ENCODE measurements at regions of chr5 and their contacts with region 1.

Region 1: GRCh38 chr5:78899922-78900362 is 85.2 kb downstream of the ARSB start:
- DNase-seq: no peak
- ATAC-seq: peak; percentile 88
- H3K4me3 ChIP-seq: no peak overlapping the region
- H3K27ac ChIP-seq: no peak overlapping the region
- H3K4me1 ChIP-seq: peaks cover 6% of the 10 kb centered on the region
- H3K27me3 ChIP-seq: no peaks in the 10 kb centered on the region
- CTCF ChIP-seq: peak; percentile 65 to 86 (median 77)
- EP300 ChIP-seq: no peak
- POLR2A ChIP-seq: no peak
- RAD21 ChIP-seq: peak; percentile 94

Region 2: DNA sequence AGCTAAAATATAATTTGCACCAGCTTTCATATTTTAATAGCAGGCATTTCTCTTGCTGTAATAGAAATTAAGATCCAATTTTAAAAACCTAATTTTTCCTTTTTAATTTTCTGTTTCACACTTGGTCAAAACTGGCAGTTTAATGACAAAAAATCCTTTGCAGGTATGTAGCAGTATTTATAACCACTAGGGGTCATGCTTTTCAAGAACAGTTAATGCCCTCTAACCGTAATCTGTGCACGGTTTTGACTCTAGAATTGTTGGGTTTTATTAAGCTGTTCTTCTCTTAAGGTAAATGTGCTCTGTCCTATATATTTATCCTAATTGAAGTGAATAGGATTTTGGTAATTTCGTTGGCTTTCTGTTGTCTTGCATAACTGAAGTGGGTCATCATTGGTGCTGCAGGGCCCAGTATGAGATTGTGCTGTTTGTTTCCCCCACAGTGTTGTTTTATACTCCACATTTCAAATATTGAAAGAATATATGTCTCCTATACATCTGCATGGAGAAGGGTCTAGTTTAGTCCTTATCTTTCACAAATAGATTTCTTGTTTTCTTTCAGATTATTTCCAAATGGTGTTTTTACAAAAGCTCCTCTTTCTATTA is 432.1 kb before region 1 on chr5:
- CTCF ChIA-PET with region 1: interaction called, 11 read pairs
- POLR2A ChIA-PET with region 1: no interaction called
- RAD21 ChIA-PET with region 1: interaction called, 3 read pairs
- SMC1A ChIA-PET with region 1: interaction called, 4 read pairs
- in situ Hi-C with region 1: no loop called
- intact Hi-C with region 1: no loop called
- DNase-seq: peak; percentile 3
- ATAC-seq: peak; percentile 91
- H3K4me3 ChIP-seq: no peak overlapping the region
- H3K27ac ChIP-seq: no peak overlapping the region
- H3K4me1 ChIP-seq: no peaks in the 10 kb centered on the region
- H3K27me3 ChIP-seq: no peaks in the 10 kb centered on the region
- CTCF ChIP-seq: peak; percentile 55 to 76 (median 64)
- EP300 ChIP-seq: no peak
- POLR2A ChIP-seq: no peak
- RAD21 ChIP-seq: peak; percentile 76

Region 3: GRCh38 chr5:78594610-78595457 is 305.1 kb before region 1 on chr5:
- CTCF ChIA-PET with region 1: no interaction called
- POLR2A ChIA-PET with region 1: no interaction called
- RAD21 ChIA-PET with region 1: interaction called, 10 read pairs
- SMC1A ChIA-PET with region 1: interaction called, 3 read pairs
- in situ Hi-C with region 1: no loop called
- intact Hi-C with region 1: no loop called
- DNase-seq: no peak
- ATAC-seq: peak; percentile 44
- H3K4me3 ChIP-seq: no peak overlapping the region
- H3K27ac ChIP-seq: no peak overlapping the region; the same call in 1 of the 2 replicates
- H3K4me1 ChIP-seq: peaks cover 26% of the 10 kb centered on the region
- H3K27me3 ChIP-seq: no peaks in the 10 kb centered on the region
- CTCF ChIP-seq: no peak
- EP300 ChIP-seq: no peak
- POLR2A ChIP-seq: no peak
- RAD21 ChIP-seq: no peak

Region 4: DNA sequence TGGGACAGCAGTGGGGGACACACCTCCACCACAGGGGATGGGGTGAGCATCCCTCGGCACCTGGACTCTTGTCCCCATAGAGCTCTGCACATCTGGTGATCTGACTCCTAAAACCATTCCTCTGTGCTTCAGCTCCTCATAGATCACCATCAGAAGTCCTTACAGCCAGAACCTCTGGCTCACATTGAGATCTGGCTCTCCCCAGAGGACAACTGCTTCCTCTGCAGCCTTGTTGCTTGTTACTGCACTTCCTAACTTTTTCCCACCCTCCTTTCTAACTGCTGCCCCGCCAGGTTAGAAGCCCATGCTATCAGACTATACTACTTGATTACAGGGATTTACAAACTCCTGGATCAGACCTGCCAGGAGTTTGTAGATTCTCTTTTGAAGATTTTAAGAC is 20.7 kb after region 1 on chr5:
- CTCF ChIA-PET with region 1: interaction called, 80 read pairs
- POLR2A ChIA-PET with region 1: no interaction called
- RAD21 ChIA-PET with region 1: interaction called, 7 read pairs
- SMC1A ChIA-PET with region 1: interaction called, 48 read pairs
- in situ Hi-C with region 1: no loop called
- intact Hi-C with region 1: no loop called
- DNase-seq: no peak
- ATAC-seq: no peak
- H3K4me3 ChIP-seq: no peak overlapping the region
- H3K27ac ChIP-seq: no peak overlapping the region
- H3K4me1 ChIP-seq: peaks cover 3% of the 10 kb centered on the region; the same call in 1 of the 2 replicates
- H3K27me3 ChIP-seq: no peaks in the 10 kb centered on the region
- CTCF ChIP-seq: peak; percentile 19 to 39 (median 36); a peak in 3 of 6 replicates
- EP300 ChIP-seq: no peak
- POLR2A ChIP-seq: no peak
- RAD21 ChIP-seq: peak; percentile 56

Region 5: DNA sequence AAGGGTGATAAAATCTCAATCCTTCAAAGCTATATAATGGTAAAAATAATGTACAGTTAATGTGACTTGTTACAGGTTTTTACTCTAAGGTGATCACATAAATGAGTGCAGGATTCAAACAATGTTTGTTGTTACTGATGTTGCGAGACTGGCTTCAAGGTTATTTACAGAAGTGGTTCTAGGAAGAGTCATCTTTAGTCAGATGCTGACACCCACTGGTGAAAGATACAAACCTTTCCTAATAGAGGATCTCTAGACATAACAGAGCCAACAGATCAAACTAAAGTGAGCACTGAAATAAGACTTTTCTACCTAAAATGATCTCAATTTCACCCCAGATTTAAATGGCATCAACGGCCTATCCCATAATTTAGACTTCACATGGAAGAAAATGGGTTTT is 64.9 kb after region 1 on chr5:
- CTCF ChIA-PET with region 1: interaction called, 268 read pairs
- POLR2A ChIA-PET with region 1: interaction called, 3 read pairs
- RAD21 ChIA-PET with region 1: interaction called, 93 read pairs
- SMC1A ChIA-PET with region 1: interaction called, 143 read pairs
- in situ Hi-C with region 1: loop called (anchors 5 kb)
- intact Hi-C with region 1: loop called (anchors 2 kb)
- DNase-seq: no peak
- ATAC-seq: peak; percentile 88
- H3K4me3 ChIP-seq: no peak overlapping the region
- H3K27ac ChIP-seq: no peak overlapping the region
- H3K4me1 ChIP-seq: no peaks in the 10 kb centered on the region
- H3K27me3 ChIP-seq: no peaks in the 10 kb centered on the region
- CTCF ChIP-seq: peak; percentile 43 to 70 (median 45); a peak in 4 of 6 replicates
- EP300 ChIP-seq: no peak
- POLR2A ChIP-seq: no peak
- RAD21 ChIP-seq: peak; percentile 92

Region 6: GRCh38 chr5:78984439-78985115 is 84.6 kb after region 1 on chr5:
- CTCF ChIA-PET with region 1: interaction called, 16 read pairs
- POLR2A ChIA-PET with region 1: interaction called, 3 read pairs
- RAD21 ChIA-PET with region 1: interaction called, 5 read pairs
- SMC1A ChIA-PET with region 1: interaction called, 4 read pairs
- in situ Hi-C with region 1: no loop called
- intact Hi-C with region 1: no loop called
- DNase-seq: no peak
- ATAC-seq: peak; percentile 54
- H3K4me3 ChIP-seq: peak overlapping the region; percentile 94
- H3K27ac ChIP-seq: peak overlapping the region; percentile 90
- H3K4me1 ChIP-seq: peaks cover 15% of the 10 kb centered on the region; the same call in 1 of the 2 replicates
- H3K27me3 ChIP-seq: no peaks in the 10 kb centered on the region
- CTCF ChIP-seq: 0 out of 6 replicates have a peak, but pooled peaks of 2 of the 3 experiments have one; percentile 13 to 23
- EP300 ChIP-seq: 0 out of 4 replicates have a peak, but pooled peaks of 1 of the 2 experiments have one; percentile 32
- POLR2A ChIP-seq: peak; percentile 89
- RAD21 ChIP-seq: no peak

Region 7: DNA sequence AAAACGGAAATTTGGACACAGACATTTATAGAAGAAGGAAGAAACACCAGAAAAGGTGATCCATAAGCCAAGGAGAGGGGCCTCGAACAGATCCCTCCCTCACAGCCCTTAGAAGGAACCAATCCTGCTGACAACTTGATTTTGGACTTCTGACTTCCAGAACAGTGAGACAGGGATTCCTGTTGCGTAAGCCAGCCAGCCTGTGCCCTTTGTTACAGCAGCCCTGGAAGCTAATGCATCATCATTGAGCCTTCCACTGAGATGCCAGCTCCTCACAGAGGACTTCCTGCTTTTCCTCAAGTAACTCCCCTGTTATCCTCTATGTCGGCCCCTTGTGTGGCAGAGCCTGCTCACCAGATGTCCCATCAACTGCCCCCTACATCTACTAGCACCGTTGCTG is 430.1 kb after region 1 on chr5:
- CTCF ChIA-PET with region 1: no interaction called
- POLR2A ChIA-PET with region 1: no interaction called
- RAD21 ChIA-PET with region 1: no interaction called
- SMC1A ChIA-PET with region 1: no interaction called
- in situ Hi-C with region 1: no loop called
- intact Hi-C with region 1: no loop called
- DNase-seq: no peak
- ATAC-seq: no peak
- H3K4me3 ChIP-seq: no peak overlapping the region
- H3K27ac ChIP-seq: no peak overlapping the region
- H3K4me1 ChIP-seq: no peaks in the 10 kb centered on the region
- H3K27me3 ChIP-seq: no peaks in the 10 kb centered on the region
- CTCF ChIP-seq: no peak
- EP300 ChIP-seq: no peak
- POLR2A ChIP-seq: no peak
- RAD21 ChIP-seq: no peak